ENCODE measurements at regions of chr22 and their contacts with region 1.

Region 1: DNA sequence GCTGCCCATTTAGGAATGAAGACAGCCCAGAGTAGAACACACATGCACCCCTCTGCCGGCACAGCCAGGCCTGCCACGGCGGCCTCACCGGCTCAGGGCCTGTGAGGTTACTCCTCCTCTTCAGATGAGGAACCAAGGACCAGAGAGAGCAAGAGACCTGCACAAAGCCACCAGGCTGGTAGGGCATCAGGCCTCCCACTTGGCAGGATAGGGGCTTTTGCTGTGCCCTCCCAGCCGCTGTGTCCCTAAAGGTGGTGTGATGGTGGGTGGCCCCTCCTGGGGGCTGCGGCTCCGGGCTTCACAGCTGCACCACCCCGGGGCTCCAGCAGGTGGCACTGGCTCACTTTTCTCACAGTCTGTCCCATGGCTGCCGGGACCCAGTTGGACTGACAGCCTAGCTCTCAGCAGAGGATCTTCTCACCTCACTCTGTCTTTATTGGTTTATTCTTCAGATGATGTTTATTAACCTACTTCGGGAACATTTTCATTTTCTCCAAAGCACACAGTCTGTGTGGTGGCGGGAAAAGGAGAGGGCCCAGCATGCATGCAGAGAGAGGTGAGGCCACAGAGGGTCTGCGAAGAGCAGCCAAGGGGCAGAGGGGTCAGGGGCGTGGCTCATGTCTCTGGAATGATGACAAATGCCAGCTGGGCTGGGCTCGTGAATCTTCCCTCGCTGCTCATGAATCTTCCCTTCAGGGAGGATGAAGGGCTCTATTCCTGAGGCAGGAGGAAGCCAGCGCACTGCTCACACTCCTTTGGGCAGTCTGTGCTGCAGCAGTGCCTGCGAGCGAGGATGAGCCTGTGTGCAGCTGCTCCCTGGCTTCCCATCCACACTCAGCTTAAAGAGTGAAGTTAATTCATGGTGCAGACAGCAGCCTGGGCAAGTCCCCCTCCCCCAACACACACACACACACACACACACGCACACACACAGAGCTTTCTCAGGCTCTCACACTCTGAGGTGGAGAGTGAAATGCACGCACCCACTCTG is 101.1 kb upstream of the PITPNB start:
- DNase-seq: no peak
- ATAC-seq: peak; percentile 95
- H3K4me3 ChIP-seq: no peak overlapping the region
- H3K27ac ChIP-seq: no peak overlapping the region
- H3K4me1 ChIP-seq: no peaks in the 10 kb centered on the region
- H3K27me3 ChIP-seq: 0 out of 4 replicates have a peak, but pooled peaks cover 0 to 1% of the 10 kb centered on the region in 2 experiments
- CTCF ChIP-seq: peak; percentile 93 to 96 (median 95)
- EP300 ChIP-seq: no peak
- POLR2A ChIP-seq: no peak
- RAD21 ChIP-seq: peak; percentile 84

Region 2: GRCh38 chr22:28442264-28442710 is 422.1 kb after region 1 on chr22:
- CTCF ChIA-PET with region 1: interaction called, 17 read pairs
- POLR2A ChIA-PET with region 1: no interaction called
- RAD21 ChIA-PET with region 1: no interaction called
- SMC1A ChIA-PET with region 1: interaction called, 4 read pairs
- in situ Hi-C with region 1: no loop called
- intact Hi-C with region 1: loop called (anchors 5 kb)
- DNase-seq: no peak
- ATAC-seq: peak; percentile 99
- H3K4me3 ChIP-seq: no peak overlapping the region
- H3K27ac ChIP-seq: no peak overlapping the region
- H3K4me1 ChIP-seq: no peaks in the 10 kb centered on the region
- H3K27me3 ChIP-seq: peaks cover 4 to 8% of the 10 kb centered on the region in 2 experiments
- CTCF ChIP-seq: peak; percentile 55 to 66 (median 61)
- EP300 ChIP-seq: no peak
- POLR2A ChIP-seq: no peak
- RAD21 ChIP-seq: peak; percentile 80